Heart right ventricle (tissue), 16 donors: ENCODE measurements at regions of chr10 and their contacts with region 1.

Region 1: GRCh38 chr10:114550756-114551635 is 107.1 kb downstream of the ABLIM1 start:
- DNase-seq: peak; percentile 59 to 80
- ATAC-seq: peak; percentile 27 to 70 (median 48)
- H3K4me3 ChIP-seq: peak overlapping the region in 6 of 10 donors; percentile 12 to 36 (median 20)
- H3K27ac ChIP-seq: peak overlapping the region; percentile 58 to 78 (median 74)
- H3K4me1 ChIP-seq: peaks cover 10 to 99% (median 70%) of the 10 kb centered on the region in 9 donors
- H3K27me3 ChIP-seq: no peaks in the 10 kb centered on the region
- CTCF ChIP-seq: peak in 8 of 9 donors; percentile 17 to 70 (median 54)

Region 2: GRCh38 chr10:114437456-114438292 is 113.3 kb before region 1 on chr10:
- intact Hi-C with region 1: no loop called
- DNase-seq: no peak
- ATAC-seq: no peak
- H3K4me3 ChIP-seq: no peak overlapping the region
- H3K27ac ChIP-seq: no peak overlapping the region
- H3K4me1 ChIP-seq: no peaks in the 10 kb centered on the region
- H3K27me3 ChIP-seq: no peaks in the 10 kb centered on the region
- CTCF ChIP-seq: peak in 8 of 9 donors; percentile 8 to 56 (median 45)

Region 3: DNA sequence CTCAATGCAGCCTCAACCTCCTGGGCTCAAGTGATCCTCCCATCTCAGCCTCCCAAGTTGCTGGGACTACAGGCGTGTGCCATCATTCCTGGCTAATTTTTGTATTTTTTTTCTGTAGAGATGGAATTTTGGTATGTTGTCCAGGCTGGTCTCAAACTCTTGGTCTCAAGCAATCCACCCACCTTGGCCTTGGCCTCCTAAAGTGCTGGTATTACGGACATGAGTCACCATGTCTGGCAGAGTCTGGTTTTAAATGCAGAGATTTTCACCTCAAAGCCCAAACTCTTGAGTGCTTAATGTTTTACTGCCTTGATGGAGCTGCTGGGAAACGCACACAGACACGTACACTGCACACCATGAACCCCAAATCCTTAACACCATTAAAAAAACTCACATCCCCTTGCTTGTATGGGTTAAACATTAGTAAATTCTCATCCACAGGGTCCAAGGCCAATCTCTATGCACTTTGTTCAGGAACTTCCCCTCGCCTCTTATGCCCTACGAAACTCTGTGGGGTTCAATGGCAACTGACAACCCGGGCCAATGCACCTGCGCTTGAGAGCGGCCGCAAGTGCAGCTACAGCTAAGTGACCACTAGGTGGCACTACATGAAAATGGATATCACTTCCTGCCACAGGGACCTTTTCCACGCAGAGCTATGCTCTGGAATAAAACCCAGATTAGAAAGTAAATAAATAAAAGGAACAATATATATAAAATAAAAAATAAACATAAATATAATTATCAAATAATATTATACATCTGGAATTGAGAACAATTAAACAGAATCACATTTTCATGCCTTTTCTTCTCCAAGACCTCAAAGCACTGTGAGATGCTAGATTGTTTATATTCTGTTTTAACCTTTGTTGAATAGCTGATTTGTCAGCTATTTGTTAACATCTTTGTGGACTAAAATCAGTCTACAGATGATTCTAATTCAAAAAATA is 79.8 kb before region 1 on chr10:
- intact Hi-C with region 1: loop called in 5 of 10 experiments (anchors 1 to 5 kb)
- DNase-seq: peak; percentile 51 to 60
- ATAC-seq: peak; percentile 55 to 86 (median 78)
- H3K4me3 ChIP-seq: no peak overlapping the region
- H3K27ac ChIP-seq: peak overlapping the region in 5 of 10 donors; percentile 3 to 39 (median 24)
- H3K4me1 ChIP-seq: peaks cover 0 to 48% (median 17%) of the 10 kb centered on the region in 9 donors
- H3K27me3 ChIP-seq: no peaks in the 10 kb centered on the region
- CTCF ChIP-seq: peak; percentile 80 to 95 (median 93)

Region 4: DNA sequence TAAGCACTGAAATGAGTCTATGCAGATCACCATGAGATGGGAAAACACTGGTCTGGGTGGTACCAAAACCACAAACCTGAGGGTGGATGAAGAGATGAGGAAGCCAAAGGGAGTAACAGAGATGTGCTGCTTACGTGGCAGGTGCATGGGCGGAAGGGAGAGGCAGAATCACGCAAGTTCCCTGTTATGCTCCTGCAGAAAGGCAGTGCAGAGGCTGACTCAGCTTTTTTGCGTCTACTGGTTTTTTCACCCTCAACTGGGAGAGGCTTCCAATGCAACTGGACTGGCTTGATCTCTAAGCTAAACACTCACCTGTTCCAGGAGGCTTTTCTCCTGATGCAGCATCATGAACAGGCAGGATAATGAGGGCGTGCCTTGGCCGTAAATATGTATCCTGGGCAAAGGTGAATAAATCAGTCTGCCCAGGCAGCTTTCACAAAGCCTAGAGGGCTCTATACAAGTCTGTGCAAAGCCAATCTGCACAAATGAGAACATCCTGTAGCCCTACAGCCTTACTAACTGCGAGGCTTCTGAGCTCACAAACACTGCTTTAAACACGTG is 51.3 kb before region 1 on chr10:
- intact Hi-C with region 1: no loop called
- DNase-seq: no peak
- ATAC-seq: peak in 1 of 8 donors; percentile 16
- H3K4me3 ChIP-seq: no peak overlapping the region
- H3K27ac ChIP-seq: peak overlapping the region in 2 of 10 donors; percentile 11 to 13
- H3K4me1 ChIP-seq: peaks cover 4 to 61% (median 40%) of the 10 kb centered on the region in 9 donors
- H3K27me3 ChIP-seq: no peaks in the 10 kb centered on the region
- CTCF ChIP-seq: no peak

Region 5: DNA sequence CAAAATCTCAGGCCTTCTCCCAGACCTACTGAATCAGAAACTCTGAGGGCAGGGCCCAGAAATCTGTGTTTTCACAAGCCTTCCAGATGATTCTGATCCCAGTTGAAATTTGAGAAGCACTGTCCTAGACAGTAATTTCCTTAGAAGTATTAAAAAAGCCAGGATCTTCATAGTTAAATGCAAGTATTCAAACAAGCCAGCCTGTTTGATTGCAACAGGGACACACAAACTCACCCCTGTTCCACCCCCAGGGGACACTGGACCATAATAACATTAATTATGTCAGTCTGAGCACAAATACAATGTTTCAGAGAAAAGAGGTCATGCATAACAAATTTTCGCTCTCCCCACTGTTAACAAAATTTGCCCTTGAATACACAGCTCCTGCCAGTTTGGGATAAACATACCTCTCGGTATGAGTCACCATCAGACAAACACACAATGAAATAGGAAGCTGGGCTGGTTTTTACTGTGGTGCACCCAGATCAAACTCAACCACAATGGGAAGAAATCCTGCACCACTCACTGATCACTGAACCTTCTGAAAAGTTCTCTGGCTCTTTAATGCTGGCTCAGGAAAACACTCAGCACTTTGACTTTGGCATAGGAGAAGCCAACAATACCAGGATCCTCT is 72.8 kb after region 1 on chr10:
- intact Hi-C with region 1: loop called in 2 of 10 experiments (anchors 5 to 10 kb)
- DNase-seq: no peak
- ATAC-seq: peak in 7 of 8 donors; percentile 45 to 77 (median 52)
- H3K4me3 ChIP-seq: no peak overlapping the region
- H3K27ac ChIP-seq: peak overlapping the region in 9 of 10 donors; percentile 31 to 95 (median 60)
- H3K4me1 ChIP-seq: peaks cover 27 to 99% (median 69%) of the 10 kb centered on the region in 9 donors
- H3K27me3 ChIP-seq: no peaks in the 10 kb centered on the region
- CTCF ChIP-seq: no peak

Region 6: DNA sequence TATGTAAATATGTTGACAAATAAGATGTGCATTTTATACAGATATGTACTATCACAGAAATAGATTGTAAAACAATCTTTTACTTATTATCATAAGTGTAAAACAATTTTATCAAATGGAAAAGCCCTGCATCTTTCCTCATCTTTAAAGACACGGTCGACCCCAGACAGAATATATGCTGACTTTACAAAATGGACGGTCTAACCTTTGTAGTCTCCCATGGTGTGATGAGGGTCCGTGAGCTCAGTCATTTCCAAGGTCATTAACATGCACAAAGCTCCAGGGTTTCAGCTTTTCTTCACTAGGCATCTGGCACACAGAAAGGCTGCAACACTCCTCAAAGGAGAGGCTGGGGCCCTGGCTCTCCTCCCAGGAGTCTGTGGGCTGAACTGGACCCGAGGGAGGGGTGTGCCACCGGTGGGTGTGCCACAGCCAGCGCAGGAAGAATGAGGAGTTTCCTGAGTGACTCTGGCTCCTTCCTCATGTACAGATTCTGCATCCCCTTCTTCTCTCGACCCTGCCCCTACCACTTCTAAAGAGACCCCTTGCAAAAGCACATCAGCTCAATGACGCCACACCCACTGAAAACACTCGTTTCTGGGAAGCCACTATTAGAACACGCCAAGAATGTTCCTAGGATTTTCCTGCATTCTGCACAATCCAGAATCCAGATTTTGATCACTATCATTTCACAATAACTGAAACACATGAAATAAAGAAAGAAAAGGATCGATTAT is 133.3 kb after region 1 on chr10:
- intact Hi-C with region 1: loop called in 1 of 10 experiments (anchors 10 kb)
- DNase-seq: peak; percentile 49 to 63
- ATAC-seq: peak; percentile 54 to 79 (median 66)
- H3K4me3 ChIP-seq: peak overlapping the region; percentile 15 to 62 (median 54)
- H3K27ac ChIP-seq: peak overlapping the region; percentile 75 to 95 (median 87)
- H3K4me1 ChIP-seq: peaks cover 19 to 92% (median 60%) of the 10 kb centered on the region in 9 donors
- H3K27me3 ChIP-seq: no peaks in the 10 kb centered on the region
- CTCF ChIP-seq: no peak

Region 7: DNA sequence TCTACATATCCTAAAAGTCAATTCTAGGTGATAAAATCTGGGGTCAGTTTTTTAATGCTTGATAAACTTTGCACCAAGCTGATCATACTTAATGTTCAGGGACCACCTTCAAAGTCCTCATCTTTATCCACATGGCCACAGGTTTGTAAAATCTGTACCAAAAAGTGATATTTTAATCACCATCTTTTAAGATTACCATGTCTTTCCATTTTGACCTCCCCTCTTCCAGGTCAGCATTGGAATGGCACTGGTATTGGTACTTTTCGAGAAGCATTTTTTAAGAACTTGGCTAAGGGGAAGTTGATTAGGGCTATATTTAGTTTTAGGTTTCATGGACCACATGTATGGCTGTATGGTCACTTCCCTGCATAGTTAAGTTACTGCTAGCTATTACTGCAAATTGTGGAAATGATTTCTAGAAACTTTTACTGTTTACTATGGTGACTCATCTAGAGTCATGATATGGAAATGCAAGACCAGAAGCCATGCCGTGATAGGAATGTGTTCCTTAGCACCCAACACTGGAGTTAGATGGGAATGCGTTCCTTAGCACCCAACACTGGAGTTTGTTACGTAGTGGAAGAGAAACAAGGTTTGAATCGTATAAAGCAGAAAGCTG is 157.8 kb after region 1 on chr10:
- intact Hi-C with region 1: loop called in 5 of 10 experiments (anchors 5 to 10 kb)
- DNase-seq: no peak
- ATAC-seq: no peak
- H3K4me3 ChIP-seq: no peak overlapping the region
- H3K27ac ChIP-seq: peak overlapping the region in 7 of 10 donors; percentile 5 to 93 (median 37)
- H3K4me1 ChIP-seq: peaks cover 3 to 92% (median 65%) of the 10 kb centered on the region in 9 donors
- H3K27me3 ChIP-seq: no peaks in the 10 kb centered on the region
- CTCF ChIP-seq: no peak

Region 8: DNA sequence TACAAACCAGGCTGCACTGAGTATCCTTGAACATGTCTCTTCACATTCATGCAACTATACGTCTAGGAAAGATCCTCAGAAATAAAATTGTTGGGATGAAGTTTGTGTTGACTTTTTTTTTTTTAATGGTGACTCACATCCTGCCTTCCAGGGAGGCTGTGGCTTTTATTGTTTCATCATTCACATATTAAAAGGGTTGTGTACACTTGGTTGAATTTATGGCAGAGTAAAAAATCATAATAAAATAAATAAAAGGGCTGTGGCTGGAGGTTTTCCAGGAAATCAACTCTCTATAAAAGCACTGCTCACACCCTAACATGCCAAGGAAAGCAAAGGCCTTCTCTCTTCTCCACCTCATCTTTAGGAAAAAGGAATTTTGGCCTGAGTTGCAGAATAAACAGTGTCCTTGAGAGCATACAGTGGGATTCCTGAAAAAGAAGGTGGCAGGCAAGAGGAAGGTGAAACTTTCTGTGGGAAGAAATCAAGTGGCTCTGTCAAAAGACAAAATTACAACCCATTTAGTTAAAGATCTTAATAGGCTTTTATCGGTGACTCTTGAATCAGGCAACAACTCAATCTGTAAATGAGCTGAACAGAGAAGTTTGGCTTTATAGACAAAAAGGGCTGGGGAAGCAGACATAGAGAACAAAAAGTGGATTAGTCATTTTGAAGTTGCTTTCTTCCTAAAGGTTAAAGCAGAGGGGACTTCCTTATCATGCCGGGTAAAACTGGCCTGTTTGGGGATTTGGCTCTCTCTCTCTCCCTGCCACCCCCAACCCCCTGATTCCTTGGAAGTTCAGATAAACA is 229.0 kb after region 1 on chr10:
- intact Hi-C with region 1: loop called in 8 of 10 experiments (anchors 5 kb)
- DNase-seq: no peak
- ATAC-seq: peak in 5 of 8 donors; percentile 38 to 76 (median 51)
- H3K4me3 ChIP-seq: no peak overlapping the region
- H3K27ac ChIP-seq: peak overlapping the region in 7 of 10 donors; percentile 16 to 51 (median 37)
- H3K4me1 ChIP-seq: peaks cover 0 to 37% (median 13%) of the 10 kb centered on the region in 9 donors
- H3K27me3 ChIP-seq: no peaks in the 10 kb centered on the region
- CTCF ChIP-seq: no peak